Ovary (tissue), 10 donors: ENCODE measurements at regions of chr1 and their contacts with region 1.

Region 1: DNA sequence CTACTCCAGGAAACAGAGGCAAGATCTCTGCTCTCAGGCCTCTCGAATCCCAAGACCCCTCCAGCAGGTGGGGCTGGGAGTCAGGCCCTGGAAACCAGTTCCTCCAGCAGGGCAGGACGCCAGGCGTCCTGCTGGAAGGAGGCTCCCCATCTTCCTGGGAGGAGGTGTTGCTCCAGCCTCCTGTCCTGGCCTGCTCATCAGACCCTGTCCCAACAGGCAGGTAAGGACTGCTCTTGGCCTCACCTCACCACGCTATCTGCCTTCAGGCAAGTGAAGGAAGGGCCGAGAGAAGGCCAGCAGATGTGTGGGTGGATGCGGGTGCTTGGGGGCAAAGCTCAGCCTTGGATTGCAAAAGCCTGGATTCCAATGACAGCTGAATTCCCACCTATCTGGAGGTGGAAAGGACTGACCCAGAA is 82.9 kb downstream of the SSBP3 start:
- DNase-seq: peak; percentile 57 to 70 (median 61)
- H3K4me3 ChIP-seq: no peak overlapping the region
- H3K27ac ChIP-seq: peak overlapping the region; percentile 36 to 43
- H3K4me1 ChIP-seq: peaks cover 52% of the 10 kb centered on the region
- H3K27me3 ChIP-seq: no peaks in the 10 kb centered on the region
- CTCF ChIP-seq: peak in 1 of 3 donors; percentile 5
- EP300 ChIP-seq: no peak
- POLR2A ChIP-seq: no peak

Region 2: GRCh38 chr1:54290506-54291184 is 32.7 kb before region 1 on chr1:
- intact Hi-C with region 1: loop called in 1 of 4 experiments (anchors 5 kb)
- DNase-seq: no peak
- H3K4me3 ChIP-seq: no peak overlapping the region
- H3K27ac ChIP-seq: no peak overlapping the region
- H3K4me1 ChIP-seq: peaks cover 69% of the 10 kb centered on the region
- H3K27me3 ChIP-seq: no peaks in the 10 kb centered on the region
- CTCF ChIP-seq: no peak
- EP300 ChIP-seq: no peak
- POLR2A ChIP-seq: no peak

Region 3: DNA sequence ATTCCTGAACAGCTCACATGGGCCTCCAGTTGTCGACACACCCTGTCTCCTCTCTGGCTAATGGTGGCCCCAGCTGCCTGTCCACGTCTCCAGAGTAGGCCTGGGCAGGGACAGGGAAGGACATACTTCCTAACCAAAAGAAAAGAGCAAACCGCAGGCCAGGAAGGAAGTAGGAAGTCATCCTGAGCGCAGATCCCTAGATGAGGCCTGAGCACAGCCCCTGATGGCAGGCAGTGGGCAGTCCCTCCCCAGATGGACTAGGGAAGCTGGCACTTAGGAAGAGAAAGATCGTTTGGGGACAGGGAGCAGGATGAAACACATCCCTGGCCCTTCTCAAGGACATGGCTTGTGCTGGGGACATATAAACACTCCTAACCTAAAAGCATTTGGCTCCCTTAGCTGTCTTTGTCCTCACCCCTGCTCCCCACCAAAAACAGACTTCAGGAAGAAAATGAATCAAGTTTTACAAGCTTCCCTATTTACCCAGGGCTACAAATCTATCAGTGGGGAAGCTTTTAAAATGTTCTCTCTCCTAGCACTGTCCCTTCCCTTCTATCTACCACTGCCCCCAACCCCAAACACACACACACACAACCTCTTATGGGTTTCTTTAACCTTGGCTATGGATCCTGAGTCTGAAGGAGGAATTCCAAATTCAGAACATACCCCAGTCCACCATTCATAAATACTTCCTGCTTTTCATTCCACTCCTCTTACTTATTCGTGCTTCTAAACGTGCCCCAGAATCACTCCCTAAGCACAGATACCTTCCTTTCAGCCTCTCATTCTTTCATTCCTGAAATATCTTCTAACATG is 61.8 kb after region 1 on chr1:
- intact Hi-C with region 1: loop called in 1 of 4 experiments (anchors 10 kb)
- DNase-seq: no peak
- H3K4me3 ChIP-seq: no peak overlapping the region
- H3K27ac ChIP-seq: peak overlapping the region in 1 of 2 donors; percentile 32
- H3K4me1 ChIP-seq: peaks cover 24% of the 10 kb centered on the region
- H3K27me3 ChIP-seq: no peaks in the 10 kb centered on the region
- CTCF ChIP-seq: no peak
- EP300 ChIP-seq: no peak
- POLR2A ChIP-seq: no peak

Region 4: GRCh38 chr1:54421101-54421504 is 97.8 kb after region 1 on chr1:
- intact Hi-C with region 1: no loop called
- DNase-seq: no peak
- H3K4me3 ChIP-seq: no peak overlapping the region
- H3K27ac ChIP-seq: no peak overlapping the region
- H3K4me1 ChIP-seq: no peaks in the 10 kb centered on the region
- H3K27me3 ChIP-seq: no peaks in the 10 kb centered on the region
- CTCF ChIP-seq: no peak
- EP300 ChIP-seq: no peak
- POLR2A ChIP-seq: no peak

Region 5: GRCh38 chr1:54609301-54609921 is 286.1 kb after region 1 on chr1:
- intact Hi-C with region 1: no loop called
- DNase-seq: peak in 2 of 5 donors; percentile 11 to 34
- H3K4me3 ChIP-seq: no peak overlapping the region
- H3K27ac ChIP-seq: no peak overlapping the region
- H3K4me1 ChIP-seq: no peaks in the 10 kb centered on the region
- H3K27me3 ChIP-seq: no peaks in the 10 kb centered on the region
- CTCF ChIP-seq: no peak
- EP300 ChIP-seq: no peak
- POLR2A ChIP-seq: no peak